Activated naive CD4-positive, alpha-beta T cell treated with anti-CD3 and anti-CD28 coated beads, Interleukin-2, amount 10 ng/mL, durations not matched to agents 7 days and 5 days (primary cell): ENCODE measurements at regions of chr5 and their contacts with region 1.

Region 1: GRCh38 chr5:135565725-135566421 is 12.9 kb downstream of the CXCL14 start:
- DNase-seq: peak; percentile 81
- H3K4me3 Mint-ChIP-seq: no peak overlapping the region
- H3K27ac Mint-ChIP-seq: no peak overlapping the region
- H3K4me1 Mint-ChIP-seq: peaks cover 8% of the 10 kb centered on the region
- H3K27me3 Mint-ChIP-seq: peaks cover 42% of the 10 kb centered on the region

Region 2: GRCh38 chr5:135457424-135458071 is 108.3 kb before region 1 on chr5:
- CTCF ChIA-PET with region 1: interaction called, 151 read pairs
- DNase-seq: peak; percentile 75
- H3K4me3 Mint-ChIP-seq: no peak overlapping the region
- H3K27ac Mint-ChIP-seq: no peak overlapping the region
- H3K4me1 Mint-ChIP-seq: peaks cover 5% of the 10 kb centered on the region
- H3K27me3 Mint-ChIP-seq: peaks cover 60% of the 10 kb centered on the region

Region 3: GRCh38 chr5:135509995-135510659 is 55.7 kb before region 1 on chr5:
- CTCF ChIA-PET with region 1: no interaction called
- DNase-seq: no peak
- H3K4me3 Mint-ChIP-seq: no peak overlapping the region
- H3K27ac Mint-ChIP-seq: no peak overlapping the region
- H3K4me1 Mint-ChIP-seq: no peaks in the 10 kb centered on the region
- H3K27me3 Mint-ChIP-seq: peaks cover 54% of the 10 kb centered on the region

Region 4: DNA sequence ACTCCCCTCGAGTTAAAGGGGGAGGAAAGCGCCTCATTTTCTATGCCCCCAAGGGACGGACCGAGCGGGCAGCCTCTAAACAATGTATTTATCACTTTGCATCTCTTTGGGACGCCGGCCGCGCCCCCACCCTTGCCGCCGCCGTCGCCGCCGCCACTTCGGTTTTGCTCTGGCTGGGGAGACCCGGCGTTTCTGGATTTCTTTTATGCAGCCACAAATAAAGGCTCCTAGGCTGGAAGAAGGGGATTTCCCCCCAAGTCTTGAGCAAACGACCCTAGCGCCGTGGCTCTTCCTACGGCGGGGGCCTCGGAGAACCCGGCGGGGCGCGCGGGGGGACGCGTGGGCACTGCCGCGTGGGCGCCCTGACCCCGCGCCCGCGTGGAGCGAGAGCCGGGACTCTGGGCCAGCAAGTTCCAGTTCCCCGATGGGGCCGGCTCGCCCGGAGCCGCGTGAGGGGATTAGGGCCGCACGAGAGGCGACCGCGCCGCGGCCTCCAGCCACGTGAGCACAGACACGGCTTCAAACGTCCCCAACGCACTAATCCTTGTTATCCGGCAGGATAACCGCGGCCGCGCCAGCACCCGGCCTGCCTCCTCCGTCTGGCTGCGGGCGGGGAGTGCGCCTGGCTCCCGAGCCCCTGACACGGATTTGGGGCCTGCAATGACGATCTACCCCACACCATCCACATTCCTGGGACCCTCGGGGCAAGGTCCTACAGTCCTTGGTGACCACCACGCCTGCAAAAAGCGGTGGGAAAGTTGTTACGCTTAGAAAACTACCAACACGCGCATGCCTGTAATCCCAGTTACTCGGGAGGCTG is 22.2 kb before region 1 on chr5:
- CTCF ChIA-PET with region 1: interaction called, 173 read pairs
- DNase-seq: peak; percentile 31
- H3K4me3 Mint-ChIP-seq: peak overlapping the region; percentile 79
- H3K27ac Mint-ChIP-seq: no peak overlapping the region
- H3K4me1 Mint-ChIP-seq: peaks cover 13% of the 10 kb centered on the region
- H3K27me3 Mint-ChIP-seq: peaks cover 100% of the 10 kb centered on the region

Region 5: DNA sequence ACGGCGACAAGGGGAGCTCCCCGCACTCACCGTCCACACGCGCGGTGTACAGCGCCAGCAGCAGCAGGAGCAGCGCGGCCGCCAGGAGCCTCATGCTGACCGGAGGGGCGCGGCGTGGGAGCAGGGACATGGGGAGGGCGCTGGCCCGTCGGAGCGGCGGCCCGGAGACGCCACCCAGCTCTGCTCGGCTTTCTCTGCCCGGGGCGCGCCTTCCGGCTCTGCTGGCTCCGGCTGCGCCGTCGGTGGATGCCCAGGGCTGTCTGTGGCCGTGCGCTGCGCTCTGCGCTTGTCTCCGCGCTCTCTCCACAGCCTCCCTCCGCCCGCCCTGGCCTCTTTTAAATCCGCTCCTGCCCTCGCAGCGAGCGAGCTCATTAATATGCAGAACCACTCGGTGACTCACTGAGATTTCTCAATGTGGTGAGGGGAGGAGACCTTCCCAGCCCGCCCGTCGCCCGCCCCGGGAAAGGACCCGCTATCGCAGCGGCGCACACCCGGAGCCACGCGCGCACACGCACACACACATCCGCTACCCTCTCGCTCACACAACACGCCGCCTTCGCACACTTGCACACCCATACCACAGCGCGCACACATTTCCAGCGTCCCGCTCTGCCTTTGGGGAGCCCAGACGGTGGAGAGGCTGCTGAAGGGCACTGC is 12.9 kb after region 1 on chr5 and contains the start of gene CXCL14:
- CTCF ChIA-PET with region 1: interaction called, 36 read pairs
- DNase-seq: no peak
- H3K4me3 Mint-ChIP-seq: no peak within 1 kb of the TSS
- H3K27ac Mint-ChIP-seq: no peak within 1 kb of the TSS
- H3K4me1 Mint-ChIP-seq: peaks cover 2% of the 10 kb centered on the region
- H3K27me3 Mint-ChIP-seq: peaks cover 81% of the 10 kb centered on the region

Region 6: DNA sequence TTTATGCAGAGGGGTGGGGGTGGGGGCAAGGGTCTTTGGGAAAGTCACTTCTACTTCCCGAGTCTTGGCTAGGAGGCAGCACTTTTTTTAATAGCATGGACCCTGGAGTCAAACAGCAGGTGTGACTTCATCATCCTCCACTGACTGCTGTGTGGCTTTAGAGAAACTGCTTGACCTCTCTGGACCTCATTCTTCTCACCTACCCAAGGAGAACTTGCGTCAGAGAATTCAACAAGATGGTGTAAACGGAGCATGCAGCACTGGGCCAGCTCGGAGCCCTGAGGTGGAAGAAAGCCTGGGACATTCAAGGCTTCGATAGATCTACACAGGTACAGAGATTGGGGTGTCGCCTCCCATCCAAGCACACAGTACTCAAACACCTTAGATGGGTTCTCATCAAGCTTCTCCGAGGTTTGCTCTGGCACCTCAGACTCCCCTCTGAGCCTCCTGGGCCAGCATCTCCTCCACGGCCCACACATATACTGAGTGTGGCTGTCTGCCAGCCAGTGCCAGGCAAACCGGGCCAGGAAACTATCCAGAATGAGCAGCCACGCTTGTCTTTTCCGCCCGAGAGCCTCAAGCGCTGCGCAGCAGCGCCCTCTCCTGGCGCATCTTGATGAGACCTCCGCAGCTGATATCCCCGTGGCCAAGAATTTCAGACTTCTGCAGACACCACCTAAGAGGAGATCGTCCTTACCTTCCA is 264.0 kb after region 1 on chr5:
- CTCF ChIA-PET with region 1: interaction called, 61 read pairs
- DNase-seq: peak; percentile 63
- H3K4me3 Mint-ChIP-seq: no peak overlapping the region
- H3K27ac Mint-ChIP-seq: no peak overlapping the region
- H3K4me1 Mint-ChIP-seq: no peaks in the 10 kb centered on the region
- H3K27me3 Mint-ChIP-seq: peaks cover 50% of the 10 kb centered on the region